ENCODE measurements at regions of chr1 and their contacts with region 1.

Region 1: DNA sequence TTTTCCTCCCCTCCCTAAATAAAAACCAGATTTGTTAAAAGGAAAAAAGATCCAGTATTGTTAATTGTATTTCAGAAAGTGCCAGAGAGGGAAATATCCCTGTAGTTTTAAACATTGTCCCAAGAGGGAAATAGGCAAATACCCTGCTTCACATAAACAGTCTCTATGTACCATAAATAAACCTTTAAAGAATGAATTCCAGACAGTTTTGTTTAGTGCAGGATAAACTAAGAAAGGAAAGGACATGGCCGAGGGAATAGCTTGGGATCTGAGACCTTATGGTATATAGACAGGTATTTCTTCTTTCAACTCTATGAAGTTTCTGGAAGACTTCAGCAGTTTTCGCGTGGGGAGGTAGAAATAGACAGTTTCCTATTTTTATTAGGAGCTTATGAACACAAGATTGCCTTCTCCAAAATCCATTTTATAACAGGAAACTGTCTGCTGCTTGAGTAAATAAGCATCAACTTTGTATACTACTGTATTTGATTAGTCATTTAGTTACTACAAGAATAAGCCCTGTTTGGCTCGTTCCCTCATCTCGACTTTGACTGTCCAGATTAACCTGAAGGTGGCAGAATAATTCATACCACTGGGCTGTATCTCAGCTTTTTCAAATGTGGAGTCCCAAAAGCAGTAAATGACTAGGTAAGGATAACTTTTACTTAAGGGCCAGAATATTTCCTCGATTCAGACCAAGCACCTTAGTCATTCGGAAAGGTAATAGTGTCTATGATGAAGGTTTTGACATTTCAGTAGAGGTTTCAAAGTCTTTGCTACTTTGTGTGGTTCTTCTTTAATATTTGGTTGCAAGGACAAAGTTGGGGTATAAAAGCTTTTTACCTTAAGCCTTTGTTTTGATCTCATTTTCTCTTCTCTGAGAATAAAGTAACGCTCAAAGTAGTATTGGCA is 177.5 kb downstream of the VPS13D start:
- DNase-seq: no peak
- H3K4me3 ChIP-seq: no peak overlapping the region
- H3K27ac ChIP-seq: peak overlapping the region; percentile 75 to 82 (median 80)
- H3K4me1 ChIP-seq: peaks cover 0 to 51% (median 49%) of the 10 kb centered on the region in 4 donors
- H3K27me3 ChIP-seq: no peaks in the 10 kb centered on the region
- CTCF ChIP-seq: peak in 3 of 4 experiments; percentile 26 to 33 (median 27)
- EP300 ChIP-seq: no peak
- POLR2A ChIP-seq: no peak

Region 2: DNA sequence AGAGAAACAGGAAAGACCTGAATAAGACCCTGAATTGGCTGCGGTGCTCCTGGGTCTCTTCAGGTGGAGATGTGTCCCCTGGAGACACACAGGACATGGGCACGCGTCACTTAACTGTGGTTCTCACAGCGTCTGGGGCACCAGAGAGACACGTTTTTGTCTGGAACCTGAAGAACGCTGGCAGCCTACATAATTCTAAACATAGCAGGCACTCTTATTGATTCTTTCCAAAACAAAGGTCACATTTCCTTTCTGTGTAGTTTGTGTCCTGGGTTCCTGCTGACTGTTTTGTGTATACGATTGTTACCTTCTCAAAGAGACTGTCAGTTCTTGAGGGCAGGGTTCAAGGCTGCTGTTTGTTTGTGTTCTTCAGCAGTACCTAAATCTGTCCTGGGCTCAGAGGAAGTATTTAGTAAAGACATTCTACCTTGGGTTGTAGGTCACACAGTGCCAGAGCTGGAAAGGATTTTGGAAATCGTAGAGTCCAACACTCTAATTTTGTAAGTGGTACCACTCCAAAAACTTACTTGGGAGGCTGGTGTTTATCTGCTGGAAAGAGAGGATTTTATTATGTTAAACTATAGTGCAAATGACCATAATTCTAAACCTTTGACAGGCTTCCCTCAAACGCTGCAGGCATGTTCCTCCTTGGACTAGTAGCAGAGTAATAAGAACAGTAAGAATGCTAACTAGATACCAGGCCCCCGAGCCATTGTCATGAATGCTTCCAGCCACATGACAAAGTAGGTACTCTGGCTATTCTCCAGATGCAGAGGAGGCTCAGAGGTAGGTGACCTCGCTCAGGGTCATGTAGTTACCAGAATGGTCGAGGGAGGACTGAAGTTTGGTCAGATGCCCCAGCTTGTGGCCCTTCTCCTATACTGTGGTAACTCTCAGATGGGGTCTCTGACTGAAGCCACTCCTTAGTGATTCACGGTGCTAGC is 46.4 kb after region 1 on chr1:
- intact Hi-C with region 1: no loop called
- DNase-seq: no peak
- H3K4me3 ChIP-seq: no peak overlapping the region
- H3K27ac ChIP-seq: peak overlapping the region; percentile 76 to 89 (median 86)
- H3K4me1 ChIP-seq: peaks cover 0 to 99% (median 94%) of the 10 kb centered on the region in 4 donors
- H3K27me3 ChIP-seq: no peaks in the 10 kb centered on the region
- CTCF ChIP-seq: no peak
- EP300 ChIP-seq: no peak
- POLR2A ChIP-seq: no peak

Region 3: DNA sequence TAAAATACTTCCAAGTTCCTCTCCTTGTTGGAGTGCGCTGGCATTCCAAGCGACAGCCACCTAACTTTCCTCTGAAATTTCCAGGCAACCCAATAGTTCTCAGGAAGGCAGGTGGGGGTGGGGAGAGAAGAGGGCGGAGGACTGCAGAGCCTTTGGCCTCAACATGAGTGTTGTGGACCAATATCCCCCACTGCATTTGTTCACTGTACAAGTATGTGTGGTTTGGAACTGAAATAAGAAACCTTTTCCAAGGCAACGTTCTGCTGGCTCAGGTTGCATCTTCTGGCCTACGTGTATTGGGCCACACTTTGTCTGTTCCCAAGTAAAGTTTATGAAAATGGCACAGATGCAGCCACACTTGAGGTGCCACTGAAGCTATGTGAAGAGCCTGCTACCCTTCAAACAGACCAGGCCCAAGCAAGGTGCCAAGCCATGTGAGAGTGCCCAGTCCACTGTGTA is 57.3 kb after region 1 on chr1:
- intact Hi-C with region 1: loop called (anchors 2 kb)
- DNase-seq: peak; percentile 89
- H3K4me3 ChIP-seq: no peak overlapping the region
- H3K27ac ChIP-seq: peak overlapping the region; percentile 73 to 89 (median 86)
- H3K4me1 ChIP-seq: peaks cover 0 to 68% (median 66%) of the 10 kb centered on the region in 4 donors
- H3K27me3 ChIP-seq: no peaks in the 10 kb centered on the region
- CTCF ChIP-seq: no peak
- EP300 ChIP-seq: peak in 1 of 4 donors; percentile 65
- POLR2A ChIP-seq: no peak

Region 4: GRCh38 chr1:12477936-12478611 is 70.8 kb after region 1 on chr1:
- intact Hi-C with region 1: loop called (anchors 5 kb)
- DNase-seq: peak; percentile 90
- H3K4me3 ChIP-seq: no peak overlapping the region
- H3K27ac ChIP-seq: peak overlapping the region; percentile 80 to 90 (median 85)
- H3K4me1 ChIP-seq: peaks cover 0 to 92% (median 88%) of the 10 kb centered on the region in 4 donors
- H3K27me3 ChIP-seq: no peaks in the 10 kb centered on the region
- CTCF ChIP-seq: no peak
- EP300 ChIP-seq: peak in 3 of 4 donors; percentile 23 to 59 (median 24)
- POLR2A ChIP-seq: no peak

Region 5: DNA sequence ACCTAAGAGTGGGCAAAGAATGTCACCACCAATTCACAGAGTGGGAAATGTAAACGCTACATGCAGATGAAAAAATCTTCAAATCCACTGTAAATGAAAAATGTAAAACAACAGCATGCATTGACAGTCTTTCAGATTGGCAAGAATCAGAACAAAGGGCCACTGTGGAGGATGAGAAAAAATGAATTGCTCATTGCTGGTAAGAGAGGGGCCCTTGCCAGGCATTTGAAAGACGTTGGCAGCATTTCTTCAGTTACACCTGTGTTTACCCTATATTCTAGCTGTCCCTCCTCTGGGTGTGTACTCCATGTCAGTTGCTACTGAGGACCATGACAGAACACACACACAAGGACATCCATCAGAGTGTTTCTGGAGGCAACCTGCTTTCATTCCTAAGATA is 282.9 kb after region 1 on chr1:
- intact Hi-C with region 1: no loop called
- DNase-seq: no peak
- H3K4me3 ChIP-seq: no peak overlapping the region
- H3K27ac ChIP-seq: no peak overlapping the region
- H3K4me1 ChIP-seq: no peaks in the 10 kb centered on the region
- H3K27me3 ChIP-seq: no peaks in the 10 kb centered on the region
- CTCF ChIP-seq: no peak
- EP300 ChIP-seq: no peak
- POLR2A ChIP-seq: no peak

Measured in sigmoid colon (tissue), 7 donors.